ENCODE measurements at regions of chr11 and their contacts with region 1.

Region 1: DNA sequence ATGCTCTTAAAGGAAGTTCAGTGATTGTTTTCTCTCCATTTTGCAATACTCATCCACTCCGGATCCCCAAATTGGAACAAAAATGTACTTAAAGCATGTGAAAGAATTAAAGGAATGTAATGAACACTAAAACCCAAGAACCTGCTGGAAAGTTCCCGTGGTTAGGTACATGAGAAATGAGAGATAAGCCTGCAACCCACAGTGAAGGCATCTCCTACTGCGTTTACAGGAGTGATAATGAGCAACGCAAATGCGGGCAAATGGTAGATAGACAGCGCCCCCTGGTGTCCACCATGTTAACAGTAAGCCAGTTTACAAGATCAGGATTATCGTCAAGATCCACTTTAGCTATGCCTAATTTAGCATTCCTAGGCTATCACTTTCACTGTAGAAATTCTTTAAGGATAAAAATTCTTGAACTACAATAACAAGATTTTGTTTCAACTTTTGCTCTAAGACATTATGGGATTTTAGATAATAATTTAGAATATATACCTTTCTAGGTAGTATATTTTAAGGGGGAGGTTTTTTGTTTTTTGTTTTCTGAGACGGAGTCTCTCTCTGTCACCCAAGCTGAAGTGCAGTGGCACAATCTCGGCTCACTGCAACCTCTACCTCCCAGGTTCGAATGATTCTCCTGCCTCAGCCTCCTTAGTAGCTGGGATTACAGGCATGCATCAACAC is 29.9 kb downstream of the ALG9 start:
- DNase-seq: peak; percentile 78
- H3K4me3 Mint-ChIP-seq: no peak overlapping the region
- H3K27ac Mint-ChIP-seq: no peak overlapping the region
- H3K4me1 Mint-ChIP-seq: peaks cover 10% of the 10 kb centered on the region
- H3K27me3 Mint-ChIP-seq: no peaks in the 10 kb centered on the region
- CTCF ChIP-seq: peak; percentile 79

Region 2: GRCh38 chr11:111454561-111455192 is 386.8 kb before region 1 on chr11:
- CTCF ChIA-PET with region 1: no interaction called
- intact Hi-C with region 1: loop called (anchors 1 kb)
- DNase-seq: peak; percentile 60
- H3K4me3 Mint-ChIP-seq: no peak overlapping the region
- H3K27ac Mint-ChIP-seq: no peak overlapping the region
- H3K4me1 Mint-ChIP-seq: no peaks in the 10 kb centered on the region
- H3K27me3 Mint-ChIP-seq: peaks cover 51% of the 10 kb centered on the region
- CTCF ChIP-seq: peak; percentile 66

Region 3: DNA sequence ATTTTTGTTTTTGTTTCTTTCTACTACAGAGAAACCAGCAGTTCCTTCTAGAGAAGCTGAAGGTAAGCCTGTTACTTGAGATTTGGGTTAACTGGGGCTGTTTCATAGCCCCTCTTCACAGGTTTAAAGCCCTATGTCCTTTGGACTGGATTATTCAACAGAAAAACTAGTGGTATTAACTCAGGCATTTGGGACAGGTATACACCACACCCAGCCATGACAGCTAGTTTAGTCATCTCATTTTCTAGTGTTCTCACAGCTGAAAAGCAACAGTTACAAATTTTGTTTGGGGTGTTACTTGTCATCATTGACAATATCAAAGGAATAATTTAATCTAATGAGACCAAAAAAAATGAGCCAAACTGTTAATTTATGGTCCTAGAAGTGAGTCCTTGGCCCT is 287.0 kb before region 1 on chr11:
- CTCF ChIA-PET with region 1: no interaction called
- intact Hi-C with region 1: no loop called
- DNase-seq: no peak
- H3K4me3 Mint-ChIP-seq: no peak overlapping the region
- H3K27ac Mint-ChIP-seq: no peak overlapping the region
- H3K4me1 Mint-ChIP-seq: peaks cover 9% of the 10 kb centered on the region
- H3K27me3 Mint-ChIP-seq: no peaks in the 10 kb centered on the region
- CTCF ChIP-seq: no peak

Region 4: GRCh38 chr11:111565114-111565720 is 276.3 kb before region 1 on chr11:
- CTCF ChIA-PET with region 1: no interaction called
- intact Hi-C with region 1: loop called (anchors 1 kb)
- DNase-seq: peak; percentile 67
- H3K4me3 Mint-ChIP-seq: no peak overlapping the region
- H3K27ac Mint-ChIP-seq: no peak overlapping the region
- H3K4me1 Mint-ChIP-seq: peaks cover 26% of the 10 kb centered on the region
- H3K27me3 Mint-ChIP-seq: no peaks in the 10 kb centered on the region
- CTCF ChIP-seq: peak; percentile 52

Region 5: GRCh38 chr11:111586388-111586831 is 255.1 kb before region 1 on chr11:
- CTCF ChIA-PET with region 1: no interaction called
- intact Hi-C with region 1: loop called (anchors 2 kb)
- DNase-seq: peak; percentile 43
- H3K4me3 Mint-ChIP-seq: no peak overlapping the region
- H3K27ac Mint-ChIP-seq: no peak overlapping the region
- H3K4me1 Mint-ChIP-seq: peaks cover 10% of the 10 kb centered on the region
- H3K27me3 Mint-ChIP-seq: no peaks in the 10 kb centered on the region
- CTCF ChIP-seq: peak; percentile 47

Region 6: GRCh38 chr11:111707039-111707690 is 134.3 kb before region 1 on chr11:
- CTCF ChIA-PET with region 1: no interaction called
- intact Hi-C with region 1: no loop called
- DNase-seq: peak; percentile 31
- H3K4me3 Mint-ChIP-seq: no peak overlapping the region
- H3K27ac Mint-ChIP-seq: no peak overlapping the region
- H3K4me1 Mint-ChIP-seq: peaks cover 15% of the 10 kb centered on the region
- H3K27me3 Mint-ChIP-seq: no peaks in the 10 kb centered on the region
- CTCF ChIP-seq: no peak

Region 7: DNA sequence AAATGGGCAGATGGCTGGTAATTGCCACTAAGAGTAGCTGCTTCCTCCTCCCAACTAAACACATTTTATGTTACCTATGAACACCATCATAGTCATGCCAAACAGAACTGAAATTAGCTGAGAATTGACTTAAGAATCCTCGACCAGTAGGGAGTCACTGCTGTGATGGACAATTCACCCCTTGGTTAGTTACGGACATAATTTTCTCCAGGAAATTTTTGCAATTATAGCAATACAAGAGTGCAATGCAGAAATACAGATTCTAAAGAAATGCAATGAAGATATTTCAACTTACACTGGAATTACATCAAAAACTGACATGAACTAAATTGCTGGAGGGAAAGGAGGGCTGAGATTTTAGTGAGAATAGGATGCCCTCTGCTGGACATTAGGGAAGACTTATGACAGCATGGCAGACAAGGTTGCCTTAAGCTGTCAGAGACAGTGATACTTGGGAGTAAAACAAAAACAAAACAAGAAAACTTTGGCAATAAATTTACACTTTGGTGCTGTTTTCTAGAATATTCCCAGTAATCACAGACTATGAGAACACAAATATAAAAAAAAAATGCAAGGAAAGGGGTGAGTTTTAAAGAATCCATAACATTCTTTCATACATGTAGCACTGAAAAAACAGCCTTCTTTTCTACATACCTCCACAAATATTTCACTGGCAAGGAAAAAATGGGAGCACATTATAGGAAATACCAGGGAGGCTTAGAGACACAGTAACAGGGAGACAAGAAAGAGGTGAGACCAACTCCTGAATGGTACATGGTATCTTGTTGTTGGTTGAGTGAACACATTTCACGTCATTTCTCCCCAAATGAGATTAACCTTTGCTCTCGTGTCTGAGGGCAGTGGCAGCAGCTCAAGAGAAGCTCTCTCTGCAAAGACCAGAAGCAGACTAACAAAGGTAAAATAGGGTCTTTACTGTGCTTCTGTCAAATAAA is 64.1 kb before region 1 on chr11:
- CTCF ChIA-PET with region 1: interaction called, 4 read pairs
- intact Hi-C with region 1: loop called (anchors 2 kb)
- DNase-seq: peak; percentile 23
- H3K4me3 Mint-ChIP-seq: no peak overlapping the region
- H3K27ac Mint-ChIP-seq: no peak overlapping the region
- H3K4me1 Mint-ChIP-seq: peaks cover 15% of the 10 kb centered on the region
- H3K27me3 Mint-ChIP-seq: no peaks in the 10 kb centered on the region
- CTCF ChIP-seq: peak; percentile 28